CD4-positive, alpha-beta memory T cell (primary cell): ENCODE measurements at regions of chr5 and their contacts with region 1.

Region 1: DNA sequence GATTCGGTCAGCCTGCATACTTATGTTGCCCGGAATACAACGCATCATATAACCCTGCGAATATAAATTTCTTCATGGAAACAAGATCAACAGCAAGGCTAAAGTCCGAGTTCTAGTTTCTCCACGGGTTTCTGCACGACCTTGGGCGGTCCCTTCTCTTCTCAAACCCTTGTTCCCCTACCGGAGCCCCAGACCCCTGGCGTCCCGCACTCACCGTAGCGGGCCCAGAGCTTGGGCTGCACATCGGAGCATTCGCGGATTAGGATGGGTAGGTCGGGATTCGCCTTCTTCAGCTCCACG is 438 bp downstream of the NDUFA2 start:
- DNase-seq: no peak
- H3K4me3 ChIP-seq: peak overlapping the region; percentile 63 to 92
- H3K4me3 Mint-ChIP-seq: peak overlapping the region; percentile 97 to 100 (median 100)
- H3K27ac ChIP-seq: peak overlapping the region; percentile 92
- H3K27ac Mint-ChIP-seq: peak overlapping the region; percentile 91 to 100 (median 100)
- H3K4me1 ChIP-seq: peaks cover 40% of the 10 kb centered on the region
- H3K4me1 Mint-ChIP-seq: peaks cover 27 to 70% (median 48%) of the 10 kb centered on the region in 4 donors
- H3K27me3 ChIP-seq: no peaks in the 10 kb centered on the region
- H3K27me3 Mint-ChIP-seq: no peaks in the 10 kb centered on the region

Region 2: GRCh38 chr5:140547508-140548299 is 99.3 kb before region 1 on chr5 and contains the start of gene EIF4EBP3:
- CTCF ChIA-PET with region 1: interaction called, 13 read pairs
- POLR2A ChIA-PET with region 1: interaction called, 74 read pairs
- intact Hi-C with region 1: loop called (anchors 1 kb)
- DNase-seq: peak; percentile 84 to 92 (median 87)
- H3K4me3 ChIP-seq: peak within 1 kb of the TSS; percentile 57 to 76
- H3K4me3 Mint-ChIP-seq: peak within 1 kb of the TSS; percentile 85 to 93 (median 89)
- H3K27ac ChIP-seq: peak within 1 kb of the TSS; percentile 77
- H3K27ac Mint-ChIP-seq: peak within 1 kb of the TSS; percentile 91 to 97 (median 97)
- H3K4me1 ChIP-seq: peaks cover 30% of the 10 kb centered on the region
- H3K4me1 Mint-ChIP-seq: peaks cover 19 to 50% (median 26%) of the 10 kb centered on the region in 4 donors
- H3K27me3 ChIP-seq: no peaks in the 10 kb centered on the region
- H3K27me3 Mint-ChIP-seq: no peaks in the 10 kb centered on the region
- total RNA-seq, gene EIF4EBP3: 15.3 to 18.8 TPM

Region 3: GRCh38 chr5:140557136-140557805 is 89.7 kb before region 1 on chr5 and contains the start of gene SRA1:
- CTCF ChIA-PET with region 1: no interaction called
- POLR2A ChIA-PET with region 1: interaction called, 40 read pairs
- intact Hi-C with region 1: no loop called
- DNase-seq: peak; percentile 75 to 86 (median 77)
- H3K4me3 ChIP-seq: peak within 1 kb of the TSS; percentile 60 to 81
- H3K4me3 Mint-ChIP-seq: peak within 1 kb of the TSS; percentile 82 to 92 (median 92)
- H3K27ac ChIP-seq: peak within 1 kb of the TSS; percentile 92
- H3K27ac Mint-ChIP-seq: peak within 1 kb of the TSS; percentile 73 to 98 (median 97)
- H3K4me1 ChIP-seq: peaks cover 41% of the 10 kb centered on the region
- H3K4me1 Mint-ChIP-seq: peaks cover 33 to 55% (median 43%) of the 10 kb centered on the region in 4 donors
- H3K27me3 ChIP-seq: no peaks in the 10 kb centered on the region
- H3K27me3 Mint-ChIP-seq: no peaks in the 10 kb centered on the region
- total RNA-seq, gene SRA1: 24.5 to 26.6 TPM

Region 4: GRCh38 chr5:140632150-140633020 is 14.6 kb before region 1 on chr5:
- CTCF ChIA-PET with region 1: interaction called, 22 read pairs
- POLR2A ChIA-PET with region 1: interaction called, 55 read pairs
- intact Hi-C with region 1: loop called (anchors 2 kb)
- DNase-seq: peak; percentile 50 to 66 (median 55)
- H3K4me3 ChIP-seq: peak overlapping the region; percentile 61 to 73
- H3K4me3 Mint-ChIP-seq: peak overlapping the region; percentile 90 to 96 (median 90)
- H3K27ac ChIP-seq: peak overlapping the region; percentile 41
- H3K27ac Mint-ChIP-seq: peak overlapping the region; percentile 68 to 93 (median 89)
- H3K4me1 ChIP-seq: peaks cover 13% of the 10 kb centered on the region
- H3K4me1 Mint-ChIP-seq: peaks cover 10 to 30% (median 20%) of the 10 kb centered on the region in 4 donors
- H3K27me3 ChIP-seq: no peaks in the 10 kb centered on the region
- H3K27me3 Mint-ChIP-seq: peaks cover 0 to 2% of the 10 kb centered on the region in 2 donors

Region 5: DNA sequence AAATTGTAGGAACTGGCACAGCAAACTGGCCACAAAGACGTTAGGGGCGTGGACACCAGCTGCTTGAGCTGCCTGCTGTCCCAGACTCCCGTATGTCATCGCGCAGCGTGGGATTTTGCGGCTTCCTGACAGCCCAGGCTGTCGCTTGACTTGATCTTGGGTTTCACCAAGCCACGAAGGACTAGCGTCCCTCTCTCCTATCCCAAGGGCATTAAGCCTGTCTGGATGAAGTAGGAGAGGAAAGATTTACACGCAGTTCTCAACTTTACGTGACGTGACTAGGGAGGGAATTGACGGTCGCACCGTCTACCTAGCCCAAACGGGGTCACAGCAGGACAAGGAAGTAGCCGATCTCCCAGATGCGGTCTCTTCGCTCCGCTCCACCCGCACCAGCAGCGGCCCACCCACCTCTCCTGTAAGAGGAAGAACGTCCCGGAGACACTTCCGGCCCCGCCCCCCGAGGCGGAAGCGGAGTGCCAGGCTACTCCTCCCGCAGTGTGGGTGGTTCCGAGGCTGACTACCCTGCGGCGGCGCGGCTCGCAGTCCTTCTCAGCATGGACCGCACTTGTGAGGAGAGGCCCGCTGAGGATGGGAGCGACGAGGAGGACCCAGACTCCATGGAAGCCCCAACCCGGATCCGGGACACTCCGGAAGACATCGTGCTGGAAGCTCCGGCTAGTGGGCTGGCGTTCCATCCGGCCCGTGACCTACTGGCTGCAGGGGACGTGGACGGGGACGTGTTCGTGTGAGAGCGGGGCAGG is 17.5 kb after region 1 on chr5 and contains the start of gene WDR55:
- CTCF ChIA-PET with region 1: interaction called, 7 read pairs
- POLR2A ChIA-PET with region 1: interaction called, 74 read pairs
- intact Hi-C with region 1: loop called (anchors 1 kb)
- DNase-seq: peak; percentile 94 to 99 (median 94)
- H3K4me3 ChIP-seq: peak within 1 kb of the TSS; percentile 90 to 98
- H3K4me3 Mint-ChIP-seq: peak within 1 kb of the TSS; percentile 96 to 99 (median 98)
- H3K27ac ChIP-seq: peak within 1 kb of the TSS; percentile 95
- H3K27ac Mint-ChIP-seq: peak within 1 kb of the TSS; percentile 98 to 99 (median 99)
- H3K4me1 ChIP-seq: peaks cover 20% of the 10 kb centered on the region
- H3K4me1 Mint-ChIP-seq: peaks cover 27 to 52% (median 34%) of the 10 kb centered on the region in 4 donors
- H3K27me3 ChIP-seq: no peaks in the 10 kb centered on the region
- H3K27me3 Mint-ChIP-seq: no peaks in the 10 kb centered on the region
- total RNA-seq, gene WDR55: 47.1 to 49.6 TPM

Region 6: DNA sequence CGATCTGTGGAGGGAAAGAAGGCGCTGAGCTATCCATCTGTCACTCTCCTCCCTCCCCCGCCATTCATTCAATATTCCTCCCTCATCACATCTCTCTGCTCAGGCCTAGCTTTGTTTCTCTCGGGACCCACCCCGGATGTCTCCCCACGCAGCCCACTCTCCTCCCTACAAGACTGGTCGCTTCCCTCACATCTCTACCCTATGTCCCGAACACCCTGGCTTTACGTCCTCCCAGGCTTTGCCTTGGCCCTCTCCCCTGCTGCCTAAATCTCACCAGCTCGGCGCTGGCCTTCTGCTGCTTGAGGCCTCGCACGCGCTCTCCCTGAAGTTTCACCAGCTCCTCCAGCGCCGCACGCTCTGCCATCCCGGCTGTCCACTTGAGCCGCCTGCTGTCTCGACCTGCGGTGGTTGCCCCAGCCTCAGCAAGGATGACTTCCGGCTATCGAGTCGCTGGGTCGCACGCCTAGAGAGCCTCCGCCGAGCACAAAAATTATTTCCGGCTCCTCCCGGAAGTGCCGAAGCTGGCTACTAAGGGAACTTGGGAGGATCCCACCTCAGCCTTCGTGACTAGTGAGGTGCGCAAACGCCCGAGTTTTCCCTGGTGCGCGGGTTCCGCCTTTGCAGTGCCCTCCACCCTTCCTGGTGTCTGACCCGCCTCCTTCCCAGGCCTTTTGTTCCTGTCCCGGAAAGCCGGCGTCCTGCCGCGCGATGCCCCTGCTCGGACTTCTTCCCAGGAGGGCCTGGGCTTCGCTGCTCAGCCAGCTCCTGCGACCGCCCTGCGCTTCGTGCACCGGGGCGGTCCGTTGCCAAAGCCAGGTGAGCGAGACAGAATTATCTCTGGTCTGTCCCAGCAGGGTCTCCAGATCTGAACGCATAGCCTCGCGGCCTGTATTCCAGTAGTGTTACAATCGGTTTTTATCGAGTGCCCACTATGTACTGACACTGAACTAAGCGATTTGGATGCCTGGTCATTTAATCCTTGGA is 44.2 kb after region 1 on chr5 and contains the starts of genes HARS1 and HARS2:
- CTCF ChIA-PET with region 1: interaction called, 6 read pairs
- POLR2A ChIA-PET with region 1: interaction called, 49 read pairs
- intact Hi-C with region 1: loop called (anchors 1 kb)
- DNase-seq: peak; percentile 77 to 89 (median 78)
- H3K4me3 ChIP-seq: peak within 1 kb of the TSS; percentile 91
- H3K4me3 Mint-ChIP-seq: peak within 1 kb of the TSS; percentile 97 to 100 (median 99)
- H3K27ac ChIP-seq: peak within 1 kb of the TSS; percentile 83
- H3K27ac Mint-ChIP-seq: peak within 1 kb of the TSS; percentile 97 to 100 (median 98)
- H3K4me1 ChIP-seq: peaks cover 34% of the 10 kb centered on the region
- H3K4me1 Mint-ChIP-seq: peaks cover 23 to 47% (median 37%) of the 10 kb centered on the region in 4 donors
- H3K27me3 ChIP-seq: no peaks in the 10 kb centered on the region
- H3K27me3 Mint-ChIP-seq: no peaks in the 10 kb centered on the region
- total RNA-seq, gene HARS1: 60.7 to 63.5 TPM
- total RNA-seq, gene HARS2: 61.6 to 67.5 TPM

Region 7: GRCh38 chr5:140700177-140701144 is 53.5 kb after region 1 on chr5 and contains the start of gene ZMAT2:
- CTCF ChIA-PET with region 1: interaction called, 4 read pairs
- POLR2A ChIA-PET with region 1: interaction called, 17 read pairs
- intact Hi-C with region 1: loop called (anchors 2 kb)
- DNase-seq: peak; percentile 89 to 98 (median 94)
- H3K4me3 ChIP-seq: peak within 1 kb of the TSS; percentile 48 to 91
- H3K4me3 Mint-ChIP-seq: peak within 1 kb of the TSS; percentile 95 to 99 (median 98)
- H3K27ac ChIP-seq: peak within 1 kb of the TSS; percentile 80
- H3K27ac Mint-ChIP-seq: peak within 1 kb of the TSS; percentile 91 to 99 (median 98)
- H3K4me1 ChIP-seq: peaks cover 18% of the 10 kb centered on the region
- H3K4me1 Mint-ChIP-seq: peaks cover 17 to 31% (median 23%) of the 10 kb centered on the region in 4 donors
- H3K27me3 ChIP-seq: no peaks in the 10 kb centered on the region
- H3K27me3 Mint-ChIP-seq: no peaks in the 10 kb centered on the region
- total RNA-seq, gene ZMAT2: 56.3 to 57.4 TPM

Region 8: DNA sequence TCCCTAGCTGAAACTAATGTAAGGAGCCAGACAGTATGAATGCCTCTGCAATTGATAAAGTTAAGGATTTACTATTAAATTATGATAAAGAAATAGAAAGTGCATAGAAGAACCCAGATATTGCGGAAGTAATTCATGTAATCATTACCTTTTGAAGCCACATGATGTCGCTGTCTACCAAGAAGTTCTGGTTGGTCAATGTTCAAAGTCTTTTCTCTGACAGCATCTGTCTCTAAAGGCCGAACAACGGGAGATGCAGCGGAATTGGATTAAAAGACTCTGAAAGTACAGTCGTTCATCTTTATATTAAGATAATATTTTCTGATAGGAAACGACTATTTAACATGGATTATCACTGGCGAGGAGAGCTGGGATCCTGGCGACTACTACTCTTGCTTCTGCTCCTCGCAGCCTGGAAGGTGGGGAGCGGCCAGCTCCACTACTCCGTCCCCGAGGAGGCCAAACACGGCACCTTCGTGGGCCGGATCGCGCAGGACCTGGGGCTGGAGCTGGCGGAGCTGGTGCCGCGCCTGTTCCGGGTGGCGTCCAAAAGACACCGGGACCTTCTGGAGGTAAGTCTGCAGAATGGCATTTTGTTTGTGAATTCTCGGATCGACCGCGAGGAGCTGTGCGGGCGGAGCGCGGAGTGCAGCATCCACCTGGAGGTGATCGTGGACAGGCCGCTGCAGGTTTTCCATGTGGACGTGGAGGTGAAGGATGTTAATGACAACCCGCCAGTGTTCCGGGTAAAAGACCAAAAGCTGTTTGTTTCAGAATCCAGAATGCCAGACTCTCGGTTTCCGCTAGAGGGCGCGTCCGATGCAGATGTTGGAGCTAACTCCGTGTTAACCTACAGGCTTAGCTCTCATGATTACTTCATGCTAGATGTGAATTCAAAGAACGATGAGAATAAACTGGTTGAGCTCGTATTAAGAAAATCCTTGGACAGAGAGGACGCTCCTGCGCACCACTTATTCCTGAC is 194.3 kb after region 1 on chr5 and contains the start of gene PCDHA8:
- CTCF ChIA-PET with region 1: no interaction called
- POLR2A ChIA-PET with region 1: no interaction called
- intact Hi-C with region 1: no loop called
- DNase-seq: peak in 1 of 5 donors; percentile 8
- H3K4me3 ChIP-seq: no peak within 1 kb of the TSS
- H3K4me3 Mint-ChIP-seq: peak within 1 kb of the TSS in 3 of 8 donors; percentile 6 to 34 (median 17)
- H3K27ac ChIP-seq: no peak within 1 kb of the TSS
- H3K27ac Mint-ChIP-seq: no peak within 1 kb of the TSS
- H3K4me1 ChIP-seq: no peaks in the 10 kb centered on the region
- H3K4me1 Mint-ChIP-seq: no peaks in the 10 kb centered on the region
- H3K27me3 ChIP-seq: no peaks in the 10 kb centered on the region
- H3K27me3 Mint-ChIP-seq: peaks cover 2 to 10% of the 10 kb centered on the region in 2 donors
- total RNA-seq, gene PCDHA8: not detected

Region 9: GRCh38 chr5:140966293-140967225 is 319.6 kb after region 1 on chr5 and contains the start of gene PCDHAC2:
- CTCF ChIA-PET with region 1: no interaction called
- POLR2A ChIA-PET with region 1: no interaction called
- intact Hi-C with region 1: no loop called
- DNase-seq: no peak
- H3K4me3 ChIP-seq: no peak within 1 kb of the TSS
- H3K4me3 Mint-ChIP-seq: peak within 1 kb of the TSS in 1 of 8 donors; percentile 43
- H3K27ac ChIP-seq: no peak within 1 kb of the TSS
- H3K27ac Mint-ChIP-seq: no peak within 1 kb of the TSS
- H3K4me1 ChIP-seq: no peaks in the 10 kb centered on the region
- H3K4me1 Mint-ChIP-seq: peaks cover 0 to 6% (median under 1%) of the 10 kb centered on the region in 4 donors
- H3K27me3 ChIP-seq: no peaks in the 10 kb centered on the region
- H3K27me3 Mint-ChIP-seq: peaks cover 19 to 25% of the 10 kb centered on the region in 2 donors
- total RNA-seq, gene PCDHAC2: not detected